ENCODE measurements at regions of chr17 and their contacts with region 1.

Region 1: DNA sequence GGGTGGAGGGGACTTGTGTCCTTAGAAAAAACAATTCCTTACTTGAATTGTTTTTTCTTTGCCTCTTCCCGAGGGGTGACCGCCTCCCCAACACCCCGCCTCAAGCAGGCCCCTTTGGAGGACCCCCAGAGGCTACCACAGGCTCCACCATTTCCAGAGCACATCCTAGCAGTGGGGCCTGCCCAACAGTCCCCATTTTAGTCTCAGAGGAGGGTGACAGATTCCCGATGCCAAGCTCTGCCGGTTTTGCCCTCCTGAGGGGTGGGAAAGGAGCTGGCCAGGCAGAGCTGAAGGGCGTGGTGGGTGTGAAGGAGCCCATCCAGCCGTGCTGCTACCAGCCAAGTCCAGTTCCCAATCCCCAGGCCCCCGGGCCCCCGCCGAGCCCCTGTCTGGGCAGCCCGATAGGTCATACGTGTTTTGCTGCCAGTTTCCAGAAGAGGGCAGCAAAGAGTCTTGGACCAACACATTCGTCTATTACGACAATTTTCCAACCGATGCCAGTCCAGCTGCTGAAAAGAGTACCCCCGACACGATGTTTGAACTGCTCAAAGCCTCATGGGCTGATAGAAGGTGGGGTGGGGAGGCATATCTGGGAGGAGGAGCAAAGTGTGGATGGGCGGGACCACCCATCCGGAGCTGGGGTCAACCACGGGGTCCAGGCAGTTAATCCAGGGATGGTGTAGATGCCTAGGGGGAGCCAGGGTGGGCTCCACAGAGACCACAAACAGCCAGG is 18.8 kb upstream of the GAA start:
- DNase-seq: no peak
- H3K4me3 ChIP-seq: no peak overlapping the region
- H3K27me3 ChIP-seq: peaks cover 2% of the 10 kb centered on the region
- CTCF ChIP-seq: peak; percentile 86

Region 2: GRCh38 chr17:80071116-80071980 is 11.2 kb before region 1 on chr17:
- CTCF ChIA-PET with region 1: interaction called, 13 read pairs
- POLR2A ChIA-PET with region 1: no interaction called
- DNase-seq: no peak
- H3K4me3 ChIP-seq: no peak overlapping the region
- H3K27me3 ChIP-seq: no peaks in the 10 kb centered on the region
- CTCF ChIP-seq: no peak

Region 3: GRCh38 chr17:80092959-80093358 is 10.4 kb after region 1 on chr17:
- CTCF ChIA-PET with region 1: interaction called, 28 read pairs
- POLR2A ChIA-PET with region 1: no interaction called
- DNase-seq: no peak
- H3K4me3 ChIP-seq: no peak overlapping the region
- H3K27me3 ChIP-seq: no peaks in the 10 kb centered on the region
- CTCF ChIP-seq: no peak